Endothelial cell of umbilical vein (primary cell): ENCODE measurements at regions of chr11 and their contacts with region 1.

Region 1: GRCh38 chr11:61477727-61478148 is 30.8 kb upstream of the LRRC10B start:
- DNase-seq: peak; percentile 39
- H3K4me3 ChIP-seq: no peak overlapping the region
- H3K27ac ChIP-seq: no peak overlapping the region
- H3K4me1 ChIP-seq: no peaks in the 10 kb centered on the region
- H3K27me3 ChIP-seq: no peaks in the 10 kb centered on the region
- CTCF ChIP-seq: peak; percentile 80 to 89
- POLR2A ChIP-seq: no peak

Region 2: GRCh38 chr11:61495801-61496597 is 18.3 kb after region 1 on chr11:
- CTCF ChIA-PET with region 1: interaction called, 16 read pairs
- POLR2A ChIA-PET with region 1: no interaction called
- dilution Hi-C with region 1: no loop called
- intact Hi-C with region 1: no loop called
- DNase-seq: no peak
- H3K4me3 ChIP-seq: no peak overlapping the region
- H3K27ac ChIP-seq: no peak overlapping the region
- H3K4me1 ChIP-seq: no peaks in the 10 kb centered on the region
- H3K27me3 ChIP-seq: no peaks in the 10 kb centered on the region
- CTCF ChIP-seq: no peak
- POLR2A ChIP-seq: no peak

Region 3: GRCh38 chr11:61532139-61533038 is 54.7 kb after region 1 on chr11:
- CTCF ChIA-PET with region 1: interaction called, 11 read pairs
- POLR2A ChIA-PET with region 1: no interaction called
- dilution Hi-C with region 1: no loop called
- intact Hi-C with region 1: no loop called
- DNase-seq: peak; percentile 25
- H3K4me3 ChIP-seq: no peak overlapping the region
- H3K27ac ChIP-seq: no peak overlapping the region
- H3K4me1 ChIP-seq: no peaks in the 10 kb centered on the region
- H3K27me3 ChIP-seq: no peaks in the 10 kb centered on the region
- CTCF ChIP-seq: peak; percentile 76 to 88
- POLR2A ChIP-seq: no peak